CD4-positive, alpha-beta memory T cell (primary cell): ENCODE measurements at regions of chr22 and their contacts with region 1.

Region 1: GRCh38 chr22:46563381-46564083 is 26.1 kb upstream of the CELSR1 start:
- DNase-seq: peak; percentile 71 to 77 (median 72)
- H3K4me3 ChIP-seq: no peak overlapping the region
- H3K4me3 Mint-ChIP-seq: peak overlapping the region in 6 of 8 donors; percentile 20 to 71 (median 54)
- H3K27ac ChIP-seq: no peak overlapping the region
- H3K27ac Mint-ChIP-seq: peak overlapping the region in 2 of 7 donors; percentile 29 to 32
- H3K4me1 ChIP-seq: peaks cover 6% of the 10 kb centered on the region
- H3K4me1 Mint-ChIP-seq: peaks cover 2 to 5% (median 4%) of the 10 kb centered on the region in 4 donors
- H3K27me3 ChIP-seq: no peaks in the 10 kb centered on the region
- H3K27me3 Mint-ChIP-seq: no peaks in the 10 kb centered on the region

Region 2: DNA sequence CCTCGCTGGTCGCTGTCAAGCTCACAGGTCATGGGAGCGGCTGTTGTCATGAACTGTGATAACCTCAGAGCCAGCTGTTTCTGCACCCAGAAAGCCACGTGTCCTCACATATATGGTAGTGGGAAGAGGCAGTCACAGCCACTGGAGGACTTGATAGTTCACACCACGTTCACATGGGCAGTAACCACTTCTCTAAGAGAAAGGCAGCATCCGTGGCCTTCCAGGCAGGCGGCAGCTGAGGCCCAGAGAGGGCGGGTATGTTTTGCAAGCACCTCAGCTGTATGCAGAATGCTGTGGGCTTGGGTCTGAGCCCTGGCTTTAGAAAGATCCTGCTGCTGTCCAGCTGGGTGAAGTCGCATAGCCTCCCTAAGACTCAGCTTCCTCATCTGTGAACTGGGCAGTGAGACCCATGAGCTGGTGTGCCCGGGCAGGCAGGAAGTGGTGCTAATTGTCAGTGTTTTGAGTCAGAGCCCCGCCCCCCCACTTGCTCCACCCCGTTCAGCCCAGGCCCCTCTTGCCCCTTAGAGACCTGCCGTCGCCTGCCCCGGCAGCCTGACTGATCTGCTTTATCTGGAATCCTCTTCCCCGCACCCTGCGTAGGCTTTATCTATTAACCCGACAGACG is 282.4 kb before region 1 on chr22:
- CTCF ChIA-PET with region 1: no interaction called
- POLR2A ChIA-PET with region 1: no interaction called
- intact Hi-C with region 1: no loop called
- DNase-seq: peak in 1 of 5 donors; percentile 20
- H3K4me3 ChIP-seq: no peak overlapping the region
- H3K4me3 Mint-ChIP-seq: no peak overlapping the region
- H3K27ac ChIP-seq: no peak overlapping the region
- H3K27ac Mint-ChIP-seq: peak overlapping the region in 2 of 7 donors; percentile 41 to 45
- H3K4me1 ChIP-seq: no peaks in the 10 kb centered on the region
- H3K4me1 Mint-ChIP-seq: no peaks in the 10 kb centered on the region
- H3K27me3 ChIP-seq: no peaks in the 10 kb centered on the region
- H3K27me3 Mint-ChIP-seq: no peaks in the 10 kb centered on the region

Region 3: GRCh38 chr22:46681010-46681409 is 117.5 kb after region 1 on chr22:
- CTCF ChIA-PET with region 1: interaction called, 15 read pairs
- POLR2A ChIA-PET with region 1: no interaction called
- intact Hi-C with region 1: loop called (anchors 1 kb)
- DNase-seq: peak in 1 of 5 donors; percentile 31
- H3K4me3 ChIP-seq: no peak overlapping the region
- H3K4me3 Mint-ChIP-seq: no peak overlapping the region
- H3K27ac ChIP-seq: no peak overlapping the region
- H3K27ac Mint-ChIP-seq: peak overlapping the region in 4 of 7 donors; percentile 41 to 72 (median 50)
- H3K4me1 ChIP-seq: peaks cover 10% of the 10 kb centered on the region
- H3K4me1 Mint-ChIP-seq: peaks cover 6 to 26% (median 17%) of the 10 kb centered on the region in 4 donors
- H3K27me3 ChIP-seq: no peaks in the 10 kb centered on the region
- H3K27me3 Mint-ChIP-seq: no peaks in the 10 kb centered on the region

Region 4: GRCh38 chr22:46686221-46687047 is 122.9 kb after region 1 on chr22:
- CTCF ChIA-PET with region 1: interaction called, 15 read pairs
- POLR2A ChIA-PET with region 1: no interaction called
- intact Hi-C with region 1: loop called (anchors 1 kb)
- DNase-seq: no peak
- H3K4me3 ChIP-seq: no peak overlapping the region
- H3K4me3 Mint-ChIP-seq: no peak overlapping the region
- H3K27ac ChIP-seq: no peak overlapping the region
- H3K27ac Mint-ChIP-seq: peak overlapping the region in 5 of 7 donors; percentile 14 to 79 (median 53)
- H3K4me1 ChIP-seq: peaks cover 13% of the 10 kb centered on the region
- H3K4me1 Mint-ChIP-seq: peaks cover 9 to 30% (median 21%) of the 10 kb centered on the region in 4 donors
- H3K27me3 ChIP-seq: no peaks in the 10 kb centered on the region
- H3K27me3 Mint-ChIP-seq: no peaks in the 10 kb centered on the region